OCI-LY7 (cell line): ENCODE measurements at regions of chr3 and their contacts with region 1.

Region 1: DNA sequence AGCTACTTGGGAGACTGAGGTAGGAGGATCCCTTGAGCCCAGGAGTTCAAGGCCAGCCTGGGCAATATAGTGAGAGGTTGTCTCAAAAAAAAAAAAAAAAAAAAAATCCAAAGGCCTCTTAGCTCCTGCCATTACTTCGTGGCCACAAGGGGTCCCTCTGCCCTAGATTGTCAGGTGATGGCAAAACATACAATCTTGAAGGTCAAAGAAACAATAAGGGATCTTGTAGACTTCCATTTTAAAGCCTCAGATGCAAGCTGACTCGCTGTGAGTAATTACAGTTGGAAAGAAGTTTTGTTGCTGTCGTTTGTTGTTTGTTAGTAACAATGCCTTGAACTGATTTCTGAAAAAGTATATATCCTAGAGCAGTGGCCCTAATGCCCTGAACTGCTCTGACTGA is 55.9 kb upstream of the PLCL2 start:
- DNase-seq: peak; percentile 77
- H3K4me3 ChIP-seq: no peak overlapping the region
- H3K27ac ChIP-seq: no peak overlapping the region
- H3K4me1 ChIP-seq: peaks cover 14% of the 10 kb centered on the region
- CTCF ChIP-seq: peak; percentile 83

Region 2: GRCh38 chr3:16728781-16729745 is 99.8 kb before region 1 on chr3:
- CTCF ChIA-PET with region 1: no interaction called
- POLR2A ChIA-PET with region 1: no interaction called
- intact Hi-C with region 1: no loop called
- DNase-seq: no peak
- H3K4me3 ChIP-seq: no peak overlapping the region
- H3K27ac ChIP-seq: no peak overlapping the region
- H3K4me1 ChIP-seq: no peaks in the 10 kb centered on the region
- CTCF ChIP-seq: no peak

Region 3: GRCh38 chr3:17032407-17033034 is 203.7 kb after region 1 on chr3:
- CTCF ChIA-PET with region 1: no interaction called
- POLR2A ChIA-PET with region 1: interaction called, 3 read pairs
- intact Hi-C with region 1: loop called (anchors 1 kb)
- DNase-seq: peak; percentile 38
- H3K4me3 ChIP-seq: no peak overlapping the region
- H3K27ac ChIP-seq: no peak overlapping the region
- H3K4me1 ChIP-seq: peaks cover 26% of the 10 kb centered on the region
- CTCF ChIP-seq: peak; percentile 85

Region 4: GRCh38 chr3:17138246-17139039 is 309.6 kb after region 1 on chr3:
- CTCF ChIA-PET with region 1: no interaction called
- POLR2A ChIA-PET with region 1: no interaction called
- intact Hi-C with region 1: loop called (anchors 2 kb)
- DNase-seq: no peak
- H3K4me3 ChIP-seq: no peak overlapping the region
- H3K27ac ChIP-seq: no peak overlapping the region
- H3K4me1 ChIP-seq: peaks cover 5% of the 10 kb centered on the region
- CTCF ChIP-seq: no peak

Region 5: DNA sequence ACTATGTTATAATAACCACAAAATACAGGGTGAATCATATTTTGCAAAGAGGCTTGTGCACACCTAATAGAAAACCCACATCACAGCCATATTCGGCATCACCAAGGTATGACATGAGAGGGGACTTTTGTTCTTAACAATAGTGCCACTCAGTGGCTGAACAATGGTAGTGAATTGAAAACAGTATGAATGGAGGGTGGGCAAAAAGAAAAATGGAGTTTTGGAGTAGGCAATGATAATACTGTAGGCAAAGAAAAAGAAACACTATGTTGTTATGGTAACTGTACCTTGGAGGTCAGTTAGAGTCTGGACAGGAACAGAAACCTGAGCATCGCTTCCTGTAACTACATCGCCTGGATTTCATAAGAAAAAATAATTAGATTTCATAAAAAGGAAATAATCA is 404.6 kb after region 1 on chr3:
- CTCF ChIA-PET with region 1: no interaction called
- POLR2A ChIA-PET with region 1: interaction called, 3 read pairs
- intact Hi-C with region 1: loop called (anchors 1 kb)
- DNase-seq: peak; percentile 83
- H3K4me3 ChIP-seq: no peak overlapping the region
- H3K27ac ChIP-seq: no peak overlapping the region
- H3K4me1 ChIP-seq: peaks cover 45% of the 10 kb centered on the region
- CTCF ChIP-seq: peak; percentile 94